Naive thymus-derived CD4-positive, alpha-beta T cell (primary cell): ENCODE measurements at regions of chr10 and their contacts with region 1.

Region 1: DNA sequence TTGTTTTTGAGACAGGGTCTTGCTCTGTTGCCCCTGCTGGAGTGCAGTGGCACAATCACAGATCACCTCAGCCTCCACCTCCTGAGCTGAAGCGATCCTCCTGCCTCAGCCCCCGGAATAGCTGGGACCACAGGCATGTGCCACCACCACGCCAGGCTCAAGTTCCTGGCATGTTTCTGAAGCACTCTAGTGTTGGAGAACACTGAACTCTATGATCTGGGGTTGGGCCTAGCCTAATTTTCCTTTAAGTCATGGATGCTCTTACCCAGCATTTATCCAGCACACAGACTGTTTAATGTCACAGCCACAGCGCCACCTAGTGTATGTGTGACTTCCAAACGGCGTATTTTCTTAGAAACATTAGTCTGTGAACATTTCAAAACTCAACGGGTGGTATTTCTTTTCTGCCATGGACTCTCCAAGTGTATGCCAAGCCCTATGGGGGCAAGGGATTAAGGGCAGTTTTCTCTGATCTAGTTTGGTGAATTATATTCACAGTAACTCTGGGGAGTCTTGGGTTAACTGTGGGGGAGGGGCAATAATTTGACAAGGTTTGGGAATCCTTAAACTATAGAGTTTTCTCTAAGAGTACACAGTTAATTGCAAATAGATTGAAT is 91.8 kb downstream of the CREM start:
- DNase-seq: peak; percentile 58 to 83 (median 76)
- ATAC-seq: peak; percentile 94
- H3K4me3 ChIP-seq: no peak overlapping the region
- H3K4me3 Mint-ChIP-seq: peak overlapping the region in 8 of 10 donors; percentile 33 to 79 (median 62)
- H3K27ac ChIP-seq: no peak overlapping the region
- H3K27ac Mint-ChIP-seq: peak overlapping the region; percentile 16 to 96 (median 77)
- H3K4me1 ChIP-seq: no peaks in the 10 kb centered on the region
- H3K4me1 Mint-ChIP-seq: peaks cover 5 to 47% (median 10%) of the 10 kb centered on the region in 7 donors
- H3K27me3 ChIP-seq: no peaks in the 10 kb centered on the region
- H3K27me3 Mint-ChIP-seq: no peaks in the 10 kb centered on the region

Region 2: GRCh38 chr10:34994565-34995142 is 223.8 kb before region 1 on chr10:
- CTCF ChIA-PET with region 1: interaction called, 5 read pairs
- POLR2A ChIA-PET with region 1: no interaction called
- intact Hi-C with region 1: loop called (anchors 1 kb)
- DNase-seq: peak in 8 of 9 donors; percentile 18 to 78 (median 50)
- ATAC-seq: peak; percentile 71
- H3K4me3 ChIP-seq: no peak overlapping the region
- H3K4me3 Mint-ChIP-seq: no peak overlapping the region
- H3K27ac ChIP-seq: no peak overlapping the region
- H3K27ac Mint-ChIP-seq: peak overlapping the region in 6 of 9 donors; percentile 28 to 83 (median 56)
- H3K4me1 ChIP-seq: peaks cover 0 to 8% of the 10 kb centered on the region in 2 donors
- H3K4me1 Mint-ChIP-seq: peaks cover 0 to 17% (median 10%) of the 10 kb centered on the region in 7 donors
- H3K27me3 ChIP-seq: no peaks in the 10 kb centered on the region
- H3K27me3 Mint-ChIP-seq: no peaks in the 10 kb centered on the region

Region 3: DNA sequence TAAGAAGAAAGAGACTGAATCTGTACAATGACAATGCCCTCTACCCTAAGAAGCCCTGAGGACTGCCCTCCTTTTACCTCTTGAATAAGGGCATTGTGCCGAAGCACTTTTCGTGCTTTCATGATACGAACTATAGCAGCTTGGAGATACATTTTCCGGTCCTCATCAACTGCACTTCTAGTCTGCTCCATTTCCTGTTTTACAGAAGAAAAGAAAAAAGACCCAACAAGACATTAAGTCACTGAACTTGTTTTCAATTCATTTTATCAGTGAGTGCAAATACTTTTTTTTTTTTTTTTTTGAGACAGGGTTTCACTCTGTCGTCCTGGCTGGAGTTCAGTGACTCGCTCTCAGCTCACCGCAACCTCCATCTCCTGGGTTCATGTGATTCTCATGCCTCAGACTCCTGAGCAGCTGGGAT is 206.7 kb before region 1 on chr10:
- CTCF ChIA-PET with region 1: no interaction called
- POLR2A ChIA-PET with region 1: no interaction called
- intact Hi-C with region 1: loop called in 1 of 2 experiments (anchors 5 kb)
- DNase-seq: peak in 7 of 9 donors; percentile 31 to 67 (median 59)
- ATAC-seq: peak; percentile 71
- H3K4me3 ChIP-seq: no peak overlapping the region
- H3K4me3 Mint-ChIP-seq: peak overlapping the region in 9 of 10 donors; percentile 46 to 83 (median 69)
- H3K27ac ChIP-seq: peak overlapping the region; percentile 61
- H3K27ac Mint-ChIP-seq: peak overlapping the region; percentile 39 to 98 (median 94)
- H3K4me1 ChIP-seq: peaks cover 0 to 10% of the 10 kb centered on the region in 2 donors
- H3K4me1 Mint-ChIP-seq: peaks cover 0 to 28% (median 17%) of the 10 kb centered on the region in 7 donors
- H3K27me3 ChIP-seq: no peaks in the 10 kb centered on the region
- H3K27me3 Mint-ChIP-seq: no peaks in the 10 kb centered on the region

Region 4: DNA sequence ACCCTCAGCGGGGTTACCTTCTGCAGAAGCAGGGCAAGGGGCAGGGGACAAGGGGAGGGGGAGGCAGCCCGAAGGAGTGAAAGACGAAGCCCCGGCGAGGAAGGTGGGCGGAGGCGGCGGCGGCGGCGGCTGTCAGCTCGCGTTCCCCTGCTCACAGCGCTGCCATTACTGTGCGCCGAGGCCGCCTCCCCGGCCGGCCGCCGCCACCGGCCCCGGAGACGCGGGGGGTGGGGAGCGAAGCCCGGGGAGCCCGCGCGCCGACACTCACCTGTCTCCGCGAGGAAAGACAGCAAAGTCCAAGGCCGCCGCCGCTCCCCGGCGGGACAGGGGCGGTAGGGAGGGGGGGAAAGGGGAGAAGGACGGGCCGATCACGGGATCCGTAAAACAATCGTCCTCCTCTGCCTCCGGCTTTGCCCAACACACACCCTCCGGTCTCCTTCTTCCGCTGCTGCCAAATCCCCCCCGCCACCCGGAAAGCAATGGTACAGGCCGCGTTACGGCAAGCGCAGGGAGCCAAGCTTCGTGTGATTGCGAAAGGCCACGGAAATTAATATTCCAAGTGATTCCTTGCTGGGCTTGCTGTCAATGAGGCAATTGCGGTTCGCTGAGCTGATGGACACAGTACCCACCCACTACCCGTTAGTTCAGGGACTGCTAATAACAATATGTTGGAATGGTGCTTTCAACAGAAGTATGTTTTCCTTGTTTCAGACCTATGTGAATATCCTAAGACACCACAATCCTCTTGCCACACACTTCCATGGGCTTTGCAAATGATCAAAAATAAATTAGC is 128.1 kb before region 1 on chr10 and contains the start of gene CUL2:
- CTCF ChIA-PET with region 1: no interaction called
- POLR2A ChIA-PET with region 1: no interaction called
- intact Hi-C with region 1: loop called in 1 of 2 experiments (anchors 1 kb)
- DNase-seq: peak; percentile 85 to 98 (median 94)
- ATAC-seq: peak; percentile 96
- H3K4me3 ChIP-seq: peak within 1 kb of the TSS; percentile 65
- H3K4me3 Mint-ChIP-seq: peak within 1 kb of the TSS; percentile 84 to 99 (median 94)
- H3K27ac ChIP-seq: peak within 1 kb of the TSS; percentile 98
- H3K27ac Mint-ChIP-seq: peak within 1 kb of the TSS; percentile 91 to 99 (median 97)
- H3K4me1 ChIP-seq: peaks cover 35 to 41% of the 10 kb centered on the region in 2 donors
- H3K4me1 Mint-ChIP-seq: peaks cover 31 to 55% (median 52%) of the 10 kb centered on the region in 7 donors
- H3K27me3 ChIP-seq: no peaks in the 10 kb centered on the region
- H3K27me3 Mint-ChIP-seq: peaks cover 0 to 8% (median 0%) of the 10 kb centered on the region in 5 donors
- total RNA-seq, gene CUL2: 30.9 to 43.7 (median 36.0) TPM

Region 5: DNA sequence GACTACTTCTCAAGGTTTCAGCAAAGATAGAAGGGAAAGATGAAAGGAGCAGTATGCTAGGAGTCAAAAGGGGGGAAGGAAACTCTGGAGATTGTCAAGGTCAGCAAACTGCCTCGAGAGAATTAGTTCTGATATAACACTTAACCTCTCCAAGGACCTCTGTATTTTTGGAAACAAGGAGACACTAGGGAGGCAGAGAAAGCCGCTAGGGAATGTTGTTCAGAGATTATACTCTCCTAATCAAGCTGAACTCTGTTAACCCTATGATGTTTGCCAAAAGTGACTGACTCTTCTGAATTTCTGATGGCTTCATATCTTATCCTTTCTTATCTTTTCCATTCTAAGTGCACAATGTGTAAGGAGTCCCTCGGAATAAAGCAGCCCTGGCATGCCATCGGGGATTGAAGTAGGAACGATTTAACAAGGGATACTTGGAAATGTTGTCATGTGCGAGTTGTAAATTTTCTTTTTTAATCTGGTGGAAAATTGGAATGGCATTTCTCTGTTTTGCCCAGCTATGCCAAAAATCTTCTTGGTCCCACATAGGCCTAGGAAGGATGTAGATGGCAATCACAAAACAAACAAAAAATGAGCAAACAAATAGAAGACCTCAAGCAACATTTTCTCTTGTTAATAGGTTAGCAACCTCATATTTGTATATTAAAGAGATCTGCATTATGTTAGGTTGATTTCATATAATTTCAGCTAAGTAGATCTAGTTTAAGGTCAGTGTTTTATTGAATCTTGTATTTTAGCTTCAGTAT is 64.5 kb before region 1 on chr10:
- CTCF ChIA-PET with region 1: no interaction called
- POLR2A ChIA-PET with region 1: no interaction called
- intact Hi-C with region 1: loop called in 1 of 2 experiments (anchors 2 kb)
- DNase-seq: no peak
- ATAC-seq: no peak
- H3K4me3 ChIP-seq: no peak overlapping the region
- H3K4me3 Mint-ChIP-seq: no peak overlapping the region
- H3K27ac ChIP-seq: no peak overlapping the region
- H3K27ac Mint-ChIP-seq: no peak overlapping the region
- H3K4me1 ChIP-seq: peaks cover 9 to 14% of the 10 kb centered on the region in 2 donors
- H3K4me1 Mint-ChIP-seq: peaks cover 17 to 36% (median 21%) of the 10 kb centered on the region in 7 donors
- H3K27me3 ChIP-seq: no peaks in the 10 kb centered on the region
- H3K27me3 Mint-ChIP-seq: no peaks in the 10 kb centered on the region